Activated CD4-positive, alpha-beta memory T cell treated with anti-CD3 and anti-CD28 coated beads for 36 hours (primary cell): ENCODE measurements at regions of chr5 and their contacts with region 1.

Region 1: GRCh38 chr5:119411935-119412602 is 40.2 kb upstream of the HSD17B4 start:
- DNase-seq: peak; percentile 55
- H3K4me3 Mint-ChIP-seq: peak overlapping the region; percentile 75
- H3K27ac Mint-ChIP-seq: peak overlapping the region; percentile 63
- H3K4me1 Mint-ChIP-seq: peaks cover 34% of the 10 kb centered on the region
- H3K27me3 Mint-ChIP-seq: no peaks in the 10 kb centered on the region

Region 2: DNA sequence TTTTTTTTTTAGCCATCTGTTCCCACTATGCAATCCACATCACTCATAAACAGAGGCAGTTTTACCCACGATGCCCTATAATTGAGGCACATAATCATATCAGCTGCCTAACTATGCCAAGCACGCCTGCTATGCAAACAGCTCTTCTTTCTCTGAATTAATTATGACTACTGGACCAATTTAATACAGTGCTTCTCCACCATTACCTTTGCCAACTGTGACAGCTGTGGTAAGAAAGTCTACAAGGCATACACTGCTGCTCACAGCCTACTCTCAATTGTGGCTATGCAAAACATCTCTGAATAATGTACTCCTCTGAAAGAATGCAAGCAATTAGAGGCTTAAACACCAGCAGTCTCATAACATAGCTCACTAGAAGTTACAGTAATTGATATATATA is 520.8 kb before region 1 on chr5:
- CTCF ChIA-PET with region 1: no interaction called
- POLR2A ChIA-PET with region 1: no interaction called
- intact Hi-C with region 1: no loop called
- DNase-seq: no peak
- H3K4me3 Mint-ChIP-seq: no peak overlapping the region
- H3K27ac Mint-ChIP-seq: no peak overlapping the region
- H3K4me1 Mint-ChIP-seq: no peaks in the 10 kb centered on the region
- H3K27me3 Mint-ChIP-seq: no peaks in the 10 kb centered on the region

Region 3: GRCh38 chr5:118987988-118988865 is 423.8 kb before region 1 on chr5 and contains the start of gene DTWD2:
- CTCF ChIA-PET with region 1: interaction called, 143 read pairs
- POLR2A ChIA-PET with region 1: no interaction called
- intact Hi-C with region 1: loop called (anchors 1 kb)
- DNase-seq: peak; percentile 95
- H3K4me3 Mint-ChIP-seq: peak within 1 kb of the TSS; percentile 70
- H3K27ac Mint-ChIP-seq: peak within 1 kb of the TSS; percentile 40
- H3K4me1 Mint-ChIP-seq: peaks cover 14% of the 10 kb centered on the region
- H3K27me3 Mint-ChIP-seq: no peaks in the 10 kb centered on the region
- total RNA-seq, gene DTWD2: 2.3 to 2.8 TPM

Region 4: DNA sequence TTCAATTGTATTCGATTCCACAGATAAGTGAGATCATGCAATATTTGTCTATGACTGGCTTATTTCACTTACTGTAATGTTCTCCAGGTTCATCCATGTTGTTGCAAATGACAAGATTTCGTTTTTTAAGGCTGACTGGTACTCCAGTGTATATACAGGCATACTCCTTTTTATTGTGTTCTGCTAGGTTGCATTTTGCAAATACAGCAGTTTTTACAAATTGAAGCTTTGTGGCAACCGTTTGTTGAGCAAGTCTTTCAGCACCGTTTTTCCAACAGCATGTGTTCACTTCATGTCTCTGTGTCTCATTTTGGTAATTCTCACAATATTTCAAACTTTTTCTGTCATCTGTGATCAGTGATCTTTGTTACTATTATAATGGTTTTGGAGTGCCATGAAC is 258.4 kb before region 1 on chr5:
- CTCF ChIA-PET with region 1: no interaction called
- POLR2A ChIA-PET with region 1: no interaction called
- intact Hi-C with region 1: no loop called
- DNase-seq: no peak
- H3K4me3 Mint-ChIP-seq: no peak overlapping the region
- H3K27ac Mint-ChIP-seq: no peak overlapping the region
- H3K4me1 Mint-ChIP-seq: no peaks in the 10 kb centered on the region
- H3K27me3 Mint-ChIP-seq: no peaks in the 10 kb centered on the region

Region 5: DNA sequence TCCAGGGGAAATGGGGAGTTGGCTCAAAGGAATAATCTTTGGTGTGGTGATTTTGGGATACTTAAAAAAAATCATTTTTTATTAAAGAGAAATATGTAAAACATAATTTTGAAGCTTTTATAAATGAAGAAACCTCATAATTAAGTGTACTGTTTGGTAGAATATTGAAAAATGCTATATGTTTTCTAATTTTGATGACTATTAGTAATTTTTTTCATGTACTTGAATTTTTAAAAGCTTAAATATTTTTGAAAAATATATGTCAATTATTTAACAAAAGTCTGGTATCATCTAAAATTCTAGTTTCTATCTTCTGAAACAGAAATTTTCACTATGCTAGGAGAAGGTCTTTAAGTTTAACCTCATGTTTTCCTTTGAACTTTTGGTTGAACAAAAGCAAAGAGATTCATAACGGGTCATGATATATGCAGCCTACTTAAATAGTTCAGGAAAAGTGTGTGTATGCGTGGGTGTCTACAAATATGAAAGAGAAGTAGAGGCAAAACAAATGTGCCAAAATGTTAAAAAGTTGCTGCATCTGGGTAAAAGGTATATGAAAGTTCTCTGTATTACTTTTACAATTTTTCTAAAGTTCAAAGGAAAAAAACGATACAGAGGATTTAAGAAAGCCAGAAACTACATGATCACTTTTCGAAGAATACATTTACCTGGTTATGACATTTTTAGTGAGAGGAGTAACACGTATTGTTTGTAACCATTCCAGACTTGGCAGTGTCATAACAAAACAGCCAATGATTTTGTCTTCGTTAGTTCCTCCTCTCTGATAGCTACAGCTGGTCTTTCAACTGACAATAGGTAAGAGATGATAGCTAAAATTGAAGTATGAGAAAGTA is 173.6 kb before region 1 on chr5:
- CTCF ChIA-PET with region 1: interaction called, 12 read pairs
- POLR2A ChIA-PET with region 1: no interaction called
- intact Hi-C with region 1: no loop called
- DNase-seq: no peak
- H3K4me3 Mint-ChIP-seq: no peak overlapping the region
- H3K27ac Mint-ChIP-seq: no peak overlapping the region
- H3K4me1 Mint-ChIP-seq: peaks cover 14% of the 10 kb centered on the region
- H3K27me3 Mint-ChIP-seq: no peaks in the 10 kb centered on the region

Region 6: DNA sequence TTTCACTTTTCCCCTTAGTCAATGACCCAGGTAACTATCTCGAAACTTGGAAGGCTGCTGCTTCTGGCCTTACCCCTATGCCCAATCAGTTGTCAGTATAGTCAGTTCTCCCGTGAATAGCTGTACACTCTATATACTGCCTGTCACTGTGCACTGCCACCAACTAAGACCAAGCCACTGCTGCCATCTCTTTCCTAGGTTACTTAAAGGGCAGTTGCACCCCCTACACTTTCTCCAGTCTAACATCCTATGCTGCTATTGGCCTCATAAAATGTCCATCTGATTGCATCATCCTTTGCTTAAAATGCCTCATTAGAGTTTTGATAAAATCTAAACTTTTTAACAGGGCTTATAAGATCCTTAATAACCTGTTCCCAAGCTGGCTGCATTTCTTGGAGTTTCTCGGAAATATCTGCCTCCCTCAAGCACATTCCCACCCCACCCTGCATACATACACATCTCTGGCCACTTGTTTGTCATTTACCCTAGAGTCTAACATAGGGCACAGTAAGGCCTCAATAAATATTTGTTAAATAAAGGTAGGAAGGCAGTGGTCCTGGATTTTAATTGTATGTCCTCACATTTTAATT is 89.0 kb before region 1 on chr5:
- CTCF ChIA-PET with region 1: interaction called, 11 read pairs
- POLR2A ChIA-PET with region 1: no interaction called
- intact Hi-C with region 1: no loop called
- DNase-seq: no peak
- H3K4me3 Mint-ChIP-seq: peak overlapping the region; percentile 68
- H3K27ac Mint-ChIP-seq: peak overlapping the region; percentile 94
- H3K4me1 Mint-ChIP-seq: peaks cover 95% of the 10 kb centered on the region
- H3K27me3 Mint-ChIP-seq: no peaks in the 10 kb centered on the region

Region 7: GRCh38 chr5:119360905-119361593 is 51.0 kb before region 1 on chr5:
- CTCF ChIA-PET with region 1: interaction called, 17 read pairs
- POLR2A ChIA-PET with region 1: interaction called, 3 read pairs
- intact Hi-C with region 1: no loop called
- DNase-seq: no peak
- H3K4me3 Mint-ChIP-seq: peak overlapping the region; percentile 99
- H3K27ac Mint-ChIP-seq: peak overlapping the region; percentile 90
- H3K4me1 Mint-ChIP-seq: peaks cover 80% of the 10 kb centered on the region
- H3K27me3 Mint-ChIP-seq: no peaks in the 10 kb centered on the region

Region 8: GRCh38 chr5:119397518-119398380 is 14.3 kb before region 1 on chr5:
- CTCF ChIA-PET with region 1: interaction called, 49 read pairs
- POLR2A ChIA-PET with region 1: interaction called, 3 read pairs
- intact Hi-C with region 1: loop called (anchors 1 kb)
- DNase-seq: peak; percentile 50
- H3K4me3 Mint-ChIP-seq: peak overlapping the region; percentile 39
- H3K27ac Mint-ChIP-seq: peak overlapping the region; percentile 90
- H3K4me1 Mint-ChIP-seq: peaks cover 84% of the 10 kb centered on the region
- H3K27me3 Mint-ChIP-seq: no peaks in the 10 kb centered on the region

Region 9: DNA sequence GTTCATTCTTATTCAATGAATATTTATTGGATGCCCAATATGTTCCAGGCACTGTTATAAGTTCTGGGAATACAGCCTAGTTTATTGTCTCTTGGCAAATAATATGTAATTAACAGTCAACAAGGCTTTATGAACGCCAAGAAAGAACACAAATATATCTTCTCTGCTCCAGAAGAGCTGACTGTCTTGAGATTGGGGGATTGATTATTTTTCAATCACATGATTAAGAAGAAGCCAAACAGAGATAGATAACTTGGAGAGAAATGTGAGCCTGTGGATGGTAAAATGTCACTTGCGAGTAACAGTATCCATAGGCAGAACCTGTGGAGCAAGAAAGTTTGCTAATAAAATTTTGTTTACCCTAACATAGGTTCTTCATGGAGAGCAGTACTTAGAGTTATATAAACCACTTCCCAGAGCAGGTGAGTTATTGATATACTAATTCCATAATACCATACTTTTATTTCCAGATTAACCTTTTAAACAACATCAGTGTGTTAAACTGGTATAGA is 89.7 kb after region 1 on chr5:
- CTCF ChIA-PET with region 1: no interaction called
- POLR2A ChIA-PET with region 1: no interaction called
- intact Hi-C with region 1: no loop called
- DNase-seq: no peak
- H3K4me3 Mint-ChIP-seq: no peak overlapping the region
- H3K27ac Mint-ChIP-seq: no peak overlapping the region
- H3K4me1 Mint-ChIP-seq: no peaks in the 10 kb centered on the region
- H3K27me3 Mint-ChIP-seq: no peaks in the 10 kb centered on the region

Region 10: DNA sequence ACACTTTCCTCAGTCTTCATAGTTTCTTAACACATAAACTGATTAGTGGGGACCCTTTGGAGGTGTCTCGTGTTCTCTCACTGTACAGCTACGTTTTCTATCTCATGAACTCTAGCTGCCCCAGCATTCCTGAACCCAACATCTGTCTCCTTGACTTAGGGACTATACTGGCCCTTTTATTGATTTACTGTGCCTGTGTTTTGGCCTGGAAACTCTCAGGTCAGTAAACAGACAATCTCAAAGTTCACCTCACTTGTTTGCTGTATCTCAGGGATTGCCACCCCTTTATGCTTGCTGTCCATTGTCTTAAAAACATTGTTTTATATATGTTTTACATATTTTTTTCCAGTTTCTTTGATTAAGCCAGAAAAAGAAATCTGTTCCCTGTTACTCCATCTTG is 440.1 kb after region 1 on chr5:
- CTCF ChIA-PET with region 1: no interaction called
- POLR2A ChIA-PET with region 1: no interaction called
- intact Hi-C with region 1: no loop called
- DNase-seq: no peak
- H3K4me3 Mint-ChIP-seq: no peak overlapping the region
- H3K27ac Mint-ChIP-seq: no peak overlapping the region
- H3K4me1 Mint-ChIP-seq: no peaks in the 10 kb centered on the region
- H3K27me3 Mint-ChIP-seq: no peaks in the 10 kb centered on the region